ENCODE measurements at regions of chr18 and their contacts with region 1.

Region 1: DNA sequence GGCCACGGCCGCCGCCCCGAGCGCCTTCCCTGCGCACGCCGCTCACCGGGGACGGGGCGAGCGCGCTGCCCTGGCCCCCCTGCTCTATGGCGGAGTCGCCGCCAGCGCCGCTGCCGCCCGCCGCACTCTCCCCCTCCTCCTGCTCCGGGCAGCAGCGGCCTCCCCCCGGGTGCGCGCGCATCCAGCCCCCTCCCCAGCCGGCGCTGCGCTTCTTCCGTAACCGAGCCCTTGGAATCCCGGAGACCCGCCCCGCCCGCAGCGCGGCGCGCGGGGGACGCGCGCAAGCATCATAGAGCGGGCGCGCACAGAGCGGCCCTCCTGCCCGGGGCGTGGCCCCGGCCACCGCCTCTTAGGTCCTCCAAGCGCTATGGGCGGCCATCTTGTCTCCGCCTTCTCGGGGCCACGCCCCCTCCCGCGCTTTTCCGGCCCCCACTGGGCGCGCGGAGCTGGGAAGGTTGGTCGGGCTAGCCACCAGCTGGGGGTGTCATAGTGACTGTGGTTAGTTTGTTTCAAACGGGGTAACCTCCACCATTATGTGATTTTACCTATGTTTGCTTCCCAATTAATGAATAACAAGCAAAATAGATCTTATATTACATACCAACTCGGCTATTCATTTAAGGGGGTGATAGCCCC is at the start of gene MBD2:
- DNase-seq: peak; percentile 95
- H3K4me3 Mint-ChIP-seq: peak within 1 kb of the TSS; percentile 90
- H3K27ac Mint-ChIP-seq: peak within 1 kb of the TSS; percentile 94
- H3K4me1 Mint-ChIP-seq: peaks cover 34% of the 10 kb centered on the region
- H3K27me3 Mint-ChIP-seq: no peaks in the 10 kb centered on the region
- total RNA-seq, gene MBD2: 102 to 103 TPM

Region 2: GRCh38 chr18:54149078-54149697 is 75.3 kb before region 1 on chr18:
- CTCF ChIA-PET with region 1: interaction called, 3 read pairs
- intact Hi-C with region 1: loop called (anchors 1 kb)
- DNase-seq: peak; percentile 92
- H3K4me3 Mint-ChIP-seq: peak overlapping the region; percentile 35
- H3K27ac Mint-ChIP-seq: peak overlapping the region; percentile 97
- H3K4me1 Mint-ChIP-seq: peaks cover 45% of the 10 kb centered on the region
- H3K27me3 Mint-ChIP-seq: no peaks in the 10 kb centered on the region

Region 3: DNA sequence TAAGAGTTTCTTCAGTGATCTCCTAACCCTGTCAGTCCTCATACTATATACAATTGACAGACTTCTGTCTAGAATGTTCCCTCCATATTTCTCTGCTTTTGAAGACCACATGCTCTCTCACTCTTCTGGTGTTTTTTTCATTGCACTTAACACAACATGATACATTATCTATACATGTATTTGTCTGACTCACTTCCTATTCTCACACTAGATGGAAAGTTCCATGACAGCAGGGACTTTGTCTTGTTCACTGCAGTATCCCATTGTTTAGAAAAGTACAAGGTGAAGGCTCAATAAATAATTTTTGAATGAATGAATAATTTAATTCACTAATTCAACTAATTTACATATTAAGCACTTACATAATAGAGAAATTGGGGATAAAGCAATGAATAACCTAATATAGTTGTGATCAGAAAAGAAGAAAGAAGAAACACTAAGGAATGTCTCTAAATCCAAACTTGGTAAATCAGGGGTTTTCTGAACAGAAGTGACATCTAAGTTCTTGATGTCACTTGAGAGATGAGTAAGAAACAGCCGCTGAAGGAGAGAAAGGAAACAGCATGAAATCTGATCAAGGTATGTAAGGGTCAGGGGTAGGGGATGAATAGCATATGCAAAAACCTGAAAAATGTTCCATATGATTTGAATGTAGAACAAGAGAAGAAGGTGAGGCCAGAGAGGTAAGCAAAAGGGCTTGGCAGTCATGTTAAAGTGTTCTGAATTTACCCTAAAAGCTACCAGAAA is 42.5 kb before region 1 on chr18:
- CTCF ChIA-PET with region 1: no interaction called
- intact Hi-C with region 1: loop called (anchors 1 kb)
- DNase-seq: peak; percentile 20
- H3K4me3 Mint-ChIP-seq: no peak overlapping the region
- H3K27ac Mint-ChIP-seq: no peak overlapping the region
- H3K4me1 Mint-ChIP-seq: peaks cover 9% of the 10 kb centered on the region
- H3K27me3 Mint-ChIP-seq: no peaks in the 10 kb centered on the region

Region 4: GRCh38 chr18:54247511-54248175 is 23.1 kb after region 1 on chr18:
- CTCF ChIA-PET with region 1: interaction called, 4 read pairs
- intact Hi-C with region 1: loop called (anchors 1 kb)
- DNase-seq: no peak
- H3K4me3 Mint-ChIP-seq: peak overlapping the region; percentile 29
- H3K27ac Mint-ChIP-seq: peak overlapping the region; percentile 80
- H3K4me1 Mint-ChIP-seq: peaks cover 28% of the 10 kb centered on the region
- H3K27me3 Mint-ChIP-seq: no peaks in the 10 kb centered on the region

Region 5: DNA sequence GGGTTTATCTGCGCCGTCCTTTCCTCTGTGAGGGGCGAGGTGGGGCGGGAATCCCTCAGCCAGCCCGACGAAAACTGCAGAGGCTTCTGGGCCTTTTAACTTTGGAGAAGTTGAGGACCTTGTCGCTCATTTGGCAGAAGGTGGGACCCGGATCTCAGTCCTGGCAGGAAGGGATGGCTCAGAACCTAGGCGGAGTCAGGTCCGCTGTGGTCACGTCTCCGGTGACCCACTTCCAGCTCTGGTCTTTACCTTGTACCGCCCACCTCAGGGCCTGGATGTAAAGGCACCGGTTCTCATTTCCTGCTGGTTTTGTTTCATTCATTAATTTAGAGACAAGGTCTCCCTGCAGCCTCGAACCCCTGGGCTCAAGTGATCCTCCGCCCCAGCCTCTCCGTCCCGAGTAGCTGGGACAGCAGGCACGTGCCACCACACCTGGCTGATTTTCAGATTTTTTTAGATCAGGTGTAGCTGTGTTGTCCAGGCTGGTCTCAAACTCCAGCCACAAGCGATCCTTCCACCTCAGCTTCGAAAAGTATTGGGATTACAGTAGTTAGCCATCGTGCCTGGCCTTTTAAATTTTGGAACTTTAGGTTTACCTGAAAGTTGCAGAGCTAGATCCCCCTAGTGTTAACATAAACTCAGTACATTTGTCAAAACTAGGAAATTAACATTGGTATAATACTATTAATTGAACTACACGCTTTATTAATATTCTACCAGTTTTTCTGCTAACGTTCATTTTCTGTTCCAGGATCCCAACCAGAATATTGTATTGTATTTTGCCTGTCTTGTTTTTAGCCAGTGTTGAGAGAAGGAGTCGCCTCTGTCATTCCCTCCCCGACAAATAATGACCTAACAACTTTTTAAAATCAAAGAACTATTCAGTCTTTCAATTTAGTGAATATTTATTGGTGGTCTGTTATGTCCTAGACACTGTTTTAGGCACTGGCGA is 45.7 kb after region 1 on chr18:
- CTCF ChIA-PET with region 1: interaction called, 42 read pairs
- intact Hi-C with region 1: loop called (anchors 1 kb)
- DNase-seq: peak; percentile 62
- H3K4me3 Mint-ChIP-seq: peak overlapping the region; percentile 83
- H3K27ac Mint-ChIP-seq: peak overlapping the region; percentile 94
- H3K4me1 Mint-ChIP-seq: peaks cover 24% of the 10 kb centered on the region
- H3K27me3 Mint-ChIP-seq: no peaks in the 10 kb centered on the region

Region 6: DNA sequence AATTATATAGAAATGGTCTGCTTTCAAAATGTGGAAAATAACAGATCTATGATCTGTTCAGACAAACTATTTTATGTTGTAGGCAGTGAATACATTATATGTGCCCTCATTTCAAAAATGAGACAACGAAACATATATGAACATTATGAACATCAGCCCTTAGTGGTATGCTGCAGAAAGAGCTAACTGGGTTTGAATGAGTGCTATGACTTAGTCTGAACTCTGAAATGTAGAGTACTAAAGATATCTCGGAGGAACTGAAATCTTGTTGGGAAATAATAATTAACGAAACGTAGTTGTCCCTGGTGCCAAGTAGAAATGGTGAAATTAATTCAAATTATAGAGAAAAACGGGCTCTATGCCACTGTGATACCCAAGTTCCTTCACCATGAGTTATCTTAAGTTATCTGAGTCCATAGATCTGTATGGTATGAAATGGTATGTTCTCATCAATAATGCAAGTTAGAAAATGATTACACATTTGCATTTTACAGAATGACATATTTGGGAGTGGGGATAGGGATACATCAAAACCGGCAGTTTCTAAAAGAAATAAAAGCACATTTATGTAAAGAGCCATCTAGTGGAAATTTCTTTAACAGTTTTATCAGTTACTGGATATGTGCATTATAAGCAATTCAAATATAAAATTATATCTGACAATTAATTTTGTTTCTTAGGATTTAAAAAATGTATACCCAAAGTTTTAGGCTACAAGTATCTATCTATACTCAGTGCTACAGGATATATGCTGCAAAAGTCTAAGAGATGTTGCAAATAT is 106.5 kb after region 1 on chr18:
- CTCF ChIA-PET with region 1: interaction called, 5 read pairs
- intact Hi-C with region 1: loop called (anchors 1 kb)
- DNase-seq: no peak
- H3K4me3 Mint-ChIP-seq: no peak overlapping the region
- H3K27ac Mint-ChIP-seq: no peak overlapping the region
- H3K4me1 Mint-ChIP-seq: peaks cover 1% of the 10 kb centered on the region
- H3K27me3 Mint-ChIP-seq: peaks cover 10% of the 10 kb centered on the region

Region 7: DNA sequence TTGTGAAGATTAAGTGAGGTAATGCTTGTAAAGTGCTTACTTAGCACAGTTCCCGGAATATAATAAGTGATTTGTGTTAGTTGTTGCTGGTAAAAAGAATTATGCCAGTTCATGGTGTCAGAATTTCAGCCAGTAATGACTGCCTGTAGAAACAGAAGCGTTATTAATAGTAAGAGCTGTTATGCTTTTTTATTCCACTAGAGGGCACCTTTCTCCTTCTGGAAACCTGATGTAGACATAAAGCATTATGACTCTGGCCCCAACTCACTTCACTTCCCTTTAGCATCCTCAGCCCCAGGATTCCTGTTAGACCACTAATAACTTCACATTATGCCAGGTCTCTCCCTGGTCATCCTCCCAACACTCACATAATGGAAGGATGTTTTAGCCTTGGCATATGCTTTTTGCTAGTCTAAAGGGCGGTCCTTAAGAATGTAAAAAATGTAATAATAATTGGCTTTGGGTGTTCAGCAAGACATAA is 168.1 kb after region 1 on chr18:
- CTCF ChIA-PET with region 1: interaction called, 4 read pairs
- intact Hi-C with region 1: loop called (anchors 1 kb)
- DNase-seq: no peak
- H3K4me3 Mint-ChIP-seq: no peak overlapping the region
- H3K27ac Mint-ChIP-seq: no peak overlapping the region
- H3K4me1 Mint-ChIP-seq: peaks cover 4% of the 10 kb centered on the region
- H3K27me3 Mint-ChIP-seq: peaks cover 21% of the 10 kb centered on the region

Measured in activated naive CD4-positive, alpha-beta T cell treated with anti-CD3 and anti-CD28 coated beads for 36 hours (primary cell).